PC-3 (cell line): ENCODE measurements at regions of chr1 and their contacts with region 1.

Region 1: GRCh38 chr1:21963477-21964217 is 13.2 kb upstream of the CELA3B start:
- DNase-seq: peak; percentile 88
- ATAC-seq: peak; percentile 85
- H3K4me3 ChIP-seq: no peak overlapping the region
- H3K27ac ChIP-seq: no peak overlapping the region
- H3K4me1 ChIP-seq: peaks cover 23% of the 10 kb centered on the region
- H3K27me3 ChIP-seq: no peaks in the 10 kb centered on the region
- CTCF ChIP-seq: peak; percentile 90

Region 2: GRCh38 chr1:21869620-21870121 is 94.0 kb before region 1 on chr1:
- CTCF ChIA-PET with region 1: no interaction called
- POLR2A ChIA-PET with region 1: no interaction called
- intact Hi-C with region 1: loop called (anchors 5 kb)
- DNase-seq: peak; percentile 99
- ATAC-seq: peak; percentile 86
- H3K4me3 ChIP-seq: no peak overlapping the region
- H3K27ac ChIP-seq: peak overlapping the region; percentile 52
- H3K4me1 ChIP-seq: peaks cover 31% of the 10 kb centered on the region
- H3K27me3 ChIP-seq: no peaks in the 10 kb centered on the region
- CTCF ChIP-seq: no peak

Region 3: DNA sequence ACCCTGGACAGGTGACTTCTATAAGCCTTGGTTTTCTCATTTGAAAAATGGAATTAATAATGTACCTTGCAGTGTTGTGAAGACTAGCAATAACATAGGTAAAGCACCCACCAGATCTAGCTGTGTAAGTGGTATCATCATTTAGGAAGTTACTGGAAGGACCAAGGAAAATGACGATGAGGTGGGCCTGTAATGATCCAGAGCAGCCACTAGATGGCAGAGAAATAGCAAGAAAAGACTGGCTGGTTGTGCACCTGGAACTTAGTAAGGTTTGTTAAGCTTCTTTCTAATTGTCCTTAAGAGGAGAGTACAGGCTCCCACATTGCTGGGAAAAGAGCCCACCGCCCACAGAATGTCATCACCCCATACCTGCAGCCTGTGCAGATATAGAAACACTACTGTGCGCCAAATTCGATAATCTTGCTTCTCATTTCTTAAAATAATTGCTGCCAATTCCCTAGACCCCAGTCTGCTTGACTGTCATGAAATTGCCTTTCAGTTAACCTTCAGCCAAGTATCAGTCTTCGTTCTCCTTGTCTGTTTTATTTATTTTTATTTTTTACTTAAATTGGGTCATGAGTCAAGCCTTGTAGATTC is 142.1 kb after region 1 on chr1:
- CTCF ChIA-PET with region 1: no interaction called
- POLR2A ChIA-PET with region 1: no interaction called
- intact Hi-C with region 1: no loop called
- DNase-seq: peak; percentile 75
- ATAC-seq: peak; percentile 63
- H3K4me3 ChIP-seq: no peak overlapping the region
- H3K27ac ChIP-seq: no peak overlapping the region
- H3K4me1 ChIP-seq: no peaks in the 10 kb centered on the region
- H3K27me3 ChIP-seq: no peaks in the 10 kb centered on the region
- CTCF ChIP-seq: peak; percentile 91